ENCODE measurements at regions of chr10 and their contacts with region 1.

Region 1: GRCh38 chr10:49164559-49165188 is 23.5 kb downstream of the TMEM273 start:
- DNase-seq: no peak
- H3K4me3 ChIP-seq: no peak overlapping the region
- H3K27ac ChIP-seq: no peak overlapping the region
- H3K27me3 ChIP-seq: no peaks in the 10 kb centered on the region
- CTCF ChIP-seq: peak; percentile 68

Region 2: GRCh38 chr10:49049660-49050059 is 115.0 kb before region 1 on chr10:
- CTCF ChIA-PET with region 1: interaction called, 14 read pairs
- POLR2A ChIA-PET with region 1: no interaction called
- DNase-seq: no peak
- H3K4me3 ChIP-seq: no peak overlapping the region
- H3K27ac ChIP-seq: no peak overlapping the region
- H3K27me3 ChIP-seq: no peaks in the 10 kb centered on the region
- CTCF ChIP-seq: no peak

Region 3: DNA sequence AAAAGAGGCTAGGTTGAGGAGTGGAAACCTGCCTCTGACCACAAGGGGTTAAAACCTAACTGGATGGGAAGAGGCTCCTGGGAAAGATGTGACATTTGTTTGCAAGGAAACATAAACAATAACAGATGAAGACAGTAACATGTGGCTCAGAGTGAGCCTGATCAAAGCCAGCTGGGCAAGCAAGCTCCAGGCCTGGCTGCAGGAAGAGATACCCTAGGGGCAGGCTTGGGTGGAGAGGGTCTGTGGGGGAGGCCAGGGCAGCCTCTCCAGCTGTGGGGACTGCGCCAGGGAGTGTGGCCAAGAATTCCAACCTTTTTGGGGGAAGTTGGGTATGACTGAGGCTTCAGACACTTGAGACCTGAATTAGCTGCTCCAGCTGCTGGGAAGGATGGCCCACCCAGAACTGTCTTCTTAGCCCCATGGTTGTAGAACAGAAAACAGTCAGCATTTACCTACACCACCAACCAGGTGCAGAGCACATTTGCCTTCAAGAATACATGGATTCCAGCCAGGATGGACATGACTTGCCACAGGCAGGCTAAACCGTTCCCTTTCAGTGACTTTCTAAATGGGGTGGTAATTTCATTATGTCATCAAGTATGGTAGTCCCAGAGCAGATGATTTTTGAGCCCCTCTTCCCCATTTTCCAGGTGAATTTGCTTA is 20.5 kb before region 1 on chr10:
- CTCF ChIA-PET with region 1: interaction called, 10 read pairs
- POLR2A ChIA-PET with region 1: interaction called, 4 read pairs
- DNase-seq: peak; percentile 74
- H3K4me3 ChIP-seq: no peak overlapping the region
- H3K27ac ChIP-seq: peak overlapping the region; percentile 39
- H3K27me3 ChIP-seq: no peaks in the 10 kb centered on the region
- CTCF ChIP-seq: 0 out of 2 replicates have a peak, but pooled peaks have one; percentile 1

Region 4: DNA sequence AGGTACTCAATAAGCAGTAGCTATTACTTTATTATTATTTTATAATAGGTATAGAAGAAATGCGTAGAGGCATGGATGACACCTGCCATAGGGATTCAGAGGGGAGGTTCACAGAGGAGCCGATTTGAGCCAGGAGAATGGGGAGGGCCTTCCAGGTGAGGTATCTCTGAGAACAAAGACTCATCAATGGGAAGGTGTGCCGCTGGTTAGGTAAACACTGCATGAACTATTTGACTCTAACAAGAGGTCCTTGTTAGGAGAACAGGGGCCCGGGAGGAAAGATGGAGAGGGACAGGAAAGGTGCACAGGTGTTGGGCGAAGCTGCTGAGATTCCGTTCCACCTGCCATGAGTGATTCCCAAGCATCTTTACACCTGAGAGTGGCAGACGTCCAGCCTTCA is 65.3 kb after region 1 on chr10:
- CTCF ChIA-PET with region 1: no interaction called
- POLR2A ChIA-PET with region 1: no interaction called
- DNase-seq: no peak
- H3K4me3 ChIP-seq: no peak overlapping the region
- H3K27ac ChIP-seq: no peak overlapping the region
- H3K27me3 ChIP-seq: peaks cover 2% of the 10 kb centered on the region
- CTCF ChIP-seq: no peak